Right cardiac atrium (tissue), 5 donors: ENCODE measurements at regions of chr10 and their contacts with region 1.

Region 1: GRCh38 chr10:95561182-95562075 is at the start of gene SORBS1:
- DNase-seq: peak; percentile 97 to 99 (median 98)
- ATAC-seq: peak; percentile 99
- H3K4me3 ChIP-seq: peak within 1 kb of the TSS; percentile 89
- H3K27ac ChIP-seq: peak within 1 kb of the TSS; percentile 84
- H3K4me1 ChIP-seq: peaks cover 11% of the 10 kb centered on the region
- H3K27me3 ChIP-seq: no peaks in the 10 kb centered on the region
- total RNA-seq, gene SORBS1: 347 to 511 (median 454) TPM

Region 2: GRCh38 chr10:95363303-95363912 is 198.0 kb before region 1 on chr10:
- intact Hi-C with region 1: no loop called
- DNase-seq: no peak
- ATAC-seq: peak in 1 of 2 donors; percentile 34
- H3K4me3 ChIP-seq: no peak overlapping the region
- H3K27ac ChIP-seq: no peak overlapping the region
- H3K4me1 ChIP-seq: peaks cover 7% of the 10 kb centered on the region
- H3K27me3 ChIP-seq: no peaks in the 10 kb centered on the region

Region 3: GRCh38 chr10:95430231-95430951 is 131.0 kb before region 1 on chr10:
- intact Hi-C with region 1: loop called in 3 of 4 experiments (anchors 5 to 10 kb)
- DNase-seq: peak in 1 of 3 donors; percentile 59
- ATAC-seq: peak; percentile 56 to 71
- H3K4me3 ChIP-seq: no peak overlapping the region
- H3K27ac ChIP-seq: peak overlapping the region; percentile 79
- H3K4me1 ChIP-seq: peaks cover 28% of the 10 kb centered on the region
- H3K27me3 ChIP-seq: no peaks in the 10 kb centered on the region

Region 4: DNA sequence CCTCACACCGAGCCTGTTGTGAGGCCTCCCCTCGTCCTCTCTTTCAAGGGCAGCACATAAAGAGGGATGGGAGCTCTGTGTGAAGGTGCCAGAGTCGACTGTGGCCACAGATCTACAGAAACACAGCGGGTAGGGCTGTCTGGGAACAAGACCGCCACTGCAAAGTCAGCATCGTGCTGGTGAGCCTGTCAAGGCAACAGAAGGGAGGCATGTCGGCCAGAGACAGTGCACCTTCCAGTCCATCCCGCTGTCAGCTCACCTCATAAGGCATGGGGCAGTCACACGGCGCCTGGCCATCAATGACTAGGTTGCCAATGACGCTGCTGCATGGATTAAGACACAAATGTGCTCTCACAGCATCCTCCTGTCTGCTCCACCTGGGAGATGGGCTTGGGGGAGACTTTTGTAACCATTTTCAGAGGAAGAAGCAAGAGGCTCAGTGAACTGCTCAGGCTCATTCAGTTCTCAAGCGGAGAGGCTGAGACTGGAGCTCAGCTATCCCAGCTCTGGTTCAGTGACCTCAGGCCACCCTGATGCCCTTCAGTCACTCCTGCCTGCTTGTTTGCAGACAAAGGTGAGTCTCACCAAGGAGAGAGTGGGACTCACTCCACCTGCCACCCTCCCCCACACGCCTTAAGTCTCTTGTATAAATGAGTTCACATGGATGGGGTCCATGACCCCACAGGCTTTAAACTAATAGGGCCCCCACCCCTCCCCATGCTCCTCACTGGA is 125.7 kb before region 1 on chr10:
- intact Hi-C with region 1: loop called in 3 of 4 experiments (anchors 5 to 10 kb)
- DNase-seq: no peak
- ATAC-seq: no peak
- H3K4me3 ChIP-seq: no peak overlapping the region
- H3K27ac ChIP-seq: peak overlapping the region; percentile 78
- H3K4me1 ChIP-seq: peaks cover 31% of the 10 kb centered on the region
- H3K27me3 ChIP-seq: no peaks in the 10 kb centered on the region

Region 5: GRCh38 chr10:95480102-95480900 is 81.1 kb before region 1 on chr10:
- intact Hi-C with region 1: loop called in 1 of 4 experiments (anchors 10 kb)
- DNase-seq: peak; percentile 70 to 79 (median 70)
- ATAC-seq: peak; percentile 65 to 80
- H3K4me3 ChIP-seq: no peak overlapping the region
- H3K27ac ChIP-seq: peak overlapping the region; percentile 96
- H3K4me1 ChIP-seq: peaks cover 27% of the 10 kb centered on the region
- H3K27me3 ChIP-seq: no peaks in the 10 kb centered on the region

Region 6: DNA sequence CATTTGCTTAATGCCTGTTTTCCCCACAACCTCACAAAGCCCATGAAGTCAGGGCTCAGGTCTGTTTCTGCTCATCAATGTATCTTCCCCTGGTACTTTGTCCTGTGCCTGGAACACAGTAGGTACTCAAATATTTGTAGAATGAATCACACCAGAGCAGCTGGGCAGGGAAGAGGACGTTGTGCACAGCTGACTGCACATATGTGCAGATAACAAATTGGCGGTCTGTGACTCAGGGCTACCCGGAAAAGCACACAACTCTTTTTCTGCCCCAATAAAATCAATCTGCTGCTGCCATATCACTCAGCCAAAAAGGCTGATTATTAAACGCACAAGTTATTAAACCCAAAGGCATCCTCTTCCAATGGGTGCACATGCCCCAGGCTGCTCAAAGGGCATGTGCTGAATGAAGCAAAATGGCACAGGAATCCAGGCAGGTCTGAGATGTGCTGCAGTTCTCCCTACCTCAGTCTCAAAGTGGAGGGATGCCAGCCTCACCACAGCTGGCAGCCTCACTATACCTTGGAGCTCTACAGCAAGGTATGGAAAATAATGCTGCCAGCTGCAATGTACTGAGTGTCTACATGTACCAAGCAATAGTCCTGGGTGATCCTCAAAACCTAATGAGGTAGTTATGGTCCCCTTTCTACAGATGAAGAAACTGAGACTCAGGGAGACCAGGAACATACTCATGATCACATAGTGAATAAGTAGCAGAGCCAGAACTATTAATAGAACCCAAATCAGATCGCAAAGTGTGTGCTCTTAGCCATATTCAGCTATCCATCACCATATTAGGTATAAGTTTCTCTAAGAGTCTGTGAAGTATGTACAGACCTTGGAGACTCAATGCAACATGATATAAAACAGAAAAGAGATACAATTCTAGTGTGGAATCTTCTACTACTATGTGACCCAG is 43.6 kb before region 1 on chr10:
- intact Hi-C with region 1: loop called in 1 of 4 experiments (anchors 5 kb)
- DNase-seq: no peak
- ATAC-seq: peak; percentile 15 to 54
- H3K4me3 ChIP-seq: no peak overlapping the region
- H3K27ac ChIP-seq: peak overlapping the region; percentile 98
- H3K4me1 ChIP-seq: peaks cover 38% of the 10 kb centered on the region
- H3K27me3 ChIP-seq: no peaks in the 10 kb centered on the region